Caco-2 (cell line): ENCODE measurements at regions of chr16 and their contacts with region 1.

Region 1: GRCh38 chr16:67104061-67104460 is 5.7 kb upstream of the PHAF1 start:
- DNase-seq: peak; percentile 59 to 62
- H3K4me3 ChIP-seq: no peak overlapping the region
- H3K4me3 Mint-ChIP-seq: no peak overlapping the region
- H3K27ac Mint-ChIP-seq: peak overlapping the region; percentile 15
- H3K4me1 ChIP-seq: peaks cover 7% of the 10 kb centered on the region
- H3K4me1 Mint-ChIP-seq: peaks cover 6% of the 10 kb centered on the region
- H3K27me3 ChIP-seq: no peaks in the 10 kb centered on the region
- H3K27me3 Mint-ChIP-seq: no peaks in the 10 kb centered on the region
- CTCF ChIP-seq: peak; percentile 49 to 56

Region 2: GRCh38 chr16:67068212-67068753 is 35.8 kb before region 1 on chr16:
- CTCF ChIA-PET with region 1: no interaction called
- POLR2A ChIA-PET with region 1: no interaction called
- intact Hi-C with region 1: loop called (anchors 5 kb)
- DNase-seq: no peak
- H3K4me3 ChIP-seq: no peak overlapping the region
- H3K4me3 Mint-ChIP-seq: no peak overlapping the region
- H3K27ac Mint-ChIP-seq: no peak overlapping the region
- H3K4me1 ChIP-seq: no peaks in the 10 kb centered on the region
- H3K4me1 Mint-ChIP-seq: no peaks in the 10 kb centered on the region
- H3K27me3 ChIP-seq: no peaks in the 10 kb centered on the region
- H3K27me3 Mint-ChIP-seq: no peaks in the 10 kb centered on the region
- CTCF ChIP-seq: no peak

Region 3: GRCh38 chr16:67137605-67138004 is 33.5 kb after region 1 on chr16:
- CTCF ChIA-PET with region 1: no interaction called
- POLR2A ChIA-PET with region 1: no interaction called
- intact Hi-C with region 1: no loop called
- DNase-seq: no peak
- H3K4me3 ChIP-seq: no peak overlapping the region
- H3K4me3 Mint-ChIP-seq: no peak overlapping the region
- H3K27ac Mint-ChIP-seq: no peak overlapping the region
- H3K4me1 ChIP-seq: no peaks in the 10 kb centered on the region
- H3K4me1 Mint-ChIP-seq: no peaks in the 10 kb centered on the region
- H3K27me3 ChIP-seq: no peaks in the 10 kb centered on the region
- H3K27me3 Mint-ChIP-seq: no peaks in the 10 kb centered on the region
- CTCF ChIP-seq: no peak